ENCODE measurements at regions of chr20 and their contacts with region 1.

Region 1: GRCh38 chr20:44723391-44723790 is 8.2 kb downstream of the CCN5 start:
- DNase-seq: no peak
- ATAC-seq: no peak
- H3K4me3 Mint-ChIP-seq: no peak overlapping the region
- H3K27ac Mint-ChIP-seq: no peak overlapping the region
- H3K4me1 Mint-ChIP-seq: no peaks in the 10 kb centered on the region
- H3K27me3 Mint-ChIP-seq: no peaks in the 10 kb centered on the region
- CTCF ChIP-seq: no peak

Region 2: GRCh38 chr20:44691424-44692423 is 31.7 kb before region 1 on chr20:
- CTCF ChIA-PET with region 1: no interaction called
- POLR2A ChIA-PET with region 1: no interaction called
- intact Hi-C with region 1: no loop called
- DNase-seq: no peak
- ATAC-seq: no peak
- H3K4me3 Mint-ChIP-seq: no peak overlapping the region
- H3K27ac Mint-ChIP-seq: no peak overlapping the region
- H3K4me1 Mint-ChIP-seq: peaks cover 9% of the 10 kb centered on the region
- H3K27me3 Mint-ChIP-seq: peaks cover 2% of the 10 kb centered on the region
- CTCF ChIP-seq: no peak

Region 3: GRCh38 chr20:44702776-44703175 is 20.6 kb before region 1 on chr20:
- CTCF ChIA-PET with region 1: no interaction called
- POLR2A ChIA-PET with region 1: no interaction called
- intact Hi-C with region 1: no loop called
- DNase-seq: no peak
- ATAC-seq: no peak
- H3K4me3 Mint-ChIP-seq: no peak overlapping the region
- H3K27ac Mint-ChIP-seq: no peak overlapping the region
- H3K4me1 Mint-ChIP-seq: no peaks in the 10 kb centered on the region
- H3K27me3 Mint-ChIP-seq: no peaks in the 10 kb centered on the region
- CTCF ChIP-seq: no peak

Region 4: DNA sequence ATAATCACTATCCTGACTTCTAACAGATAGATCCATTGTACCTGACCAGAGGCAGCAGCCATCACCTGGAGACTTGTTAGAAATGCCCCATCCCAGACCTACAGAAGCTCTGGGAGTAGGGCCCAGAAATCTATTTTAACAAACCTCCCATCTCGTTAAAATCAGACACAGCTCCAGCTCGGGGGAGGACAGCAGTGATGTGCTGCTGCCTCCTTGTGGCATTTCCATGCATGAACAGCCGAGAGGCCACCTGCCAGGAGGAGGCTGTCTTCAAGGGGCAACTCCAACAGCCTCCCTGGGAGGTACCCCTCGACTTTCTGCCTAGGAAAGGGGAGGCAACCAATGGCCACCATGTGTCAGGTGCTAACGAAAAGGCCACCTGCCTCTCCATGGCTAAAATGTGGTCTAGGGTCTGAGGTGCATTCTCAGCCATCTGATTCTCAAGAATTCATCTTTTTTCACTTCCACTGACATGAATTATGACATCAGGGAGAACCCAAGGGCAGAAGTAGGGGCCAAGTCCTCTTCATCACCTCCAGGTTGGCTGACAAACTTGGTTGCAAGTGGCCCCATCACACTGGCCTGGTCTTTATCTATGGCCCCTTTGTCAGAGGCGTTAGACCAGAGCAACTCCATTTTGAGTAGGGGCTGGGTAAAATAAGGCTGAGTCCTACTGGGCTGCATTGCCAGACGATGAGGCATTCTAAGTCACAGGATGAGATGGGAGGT is 10.1 kb after region 1 on chr20:
- CTCF ChIA-PET with region 1: interaction called, 11 read pairs
- POLR2A ChIA-PET with region 1: interaction called, 3 read pairs
- intact Hi-C with region 1: no loop called
- DNase-seq: peak; percentile 77
- ATAC-seq: peak; percentile 78
- H3K4me3 Mint-ChIP-seq: no peak overlapping the region
- H3K27ac Mint-ChIP-seq: no peak overlapping the region
- H3K4me1 Mint-ChIP-seq: peaks cover 25% of the 10 kb centered on the region
- H3K27me3 Mint-ChIP-seq: no peaks in the 10 kb centered on the region
- CTCF ChIP-seq: peak; percentile 81

Measured in activated CD8-positive, alpha-beta T cell treated with anti-CD3 and anti-CD28 coated beads for 36 hours (primary cell).